HEK293 (cell line): ENCODE measurements at regions of chr21 and their contacts with region 1.

Region 1: GRCh38 chr21:32940079-32941014 is 85.4 kb upstream of the OLIG2 start:
- H3K4me3 ChIP-seq: no peak overlapping the region
- H3K27ac ChIP-seq: no peak overlapping the region
- H3K4me1 ChIP-seq: no peaks in the 10 kb centered on the region
- CTCF ChIP-seq: peak; percentile 50; the same call in 1 of the 2 replicates

Region 2: DNA sequence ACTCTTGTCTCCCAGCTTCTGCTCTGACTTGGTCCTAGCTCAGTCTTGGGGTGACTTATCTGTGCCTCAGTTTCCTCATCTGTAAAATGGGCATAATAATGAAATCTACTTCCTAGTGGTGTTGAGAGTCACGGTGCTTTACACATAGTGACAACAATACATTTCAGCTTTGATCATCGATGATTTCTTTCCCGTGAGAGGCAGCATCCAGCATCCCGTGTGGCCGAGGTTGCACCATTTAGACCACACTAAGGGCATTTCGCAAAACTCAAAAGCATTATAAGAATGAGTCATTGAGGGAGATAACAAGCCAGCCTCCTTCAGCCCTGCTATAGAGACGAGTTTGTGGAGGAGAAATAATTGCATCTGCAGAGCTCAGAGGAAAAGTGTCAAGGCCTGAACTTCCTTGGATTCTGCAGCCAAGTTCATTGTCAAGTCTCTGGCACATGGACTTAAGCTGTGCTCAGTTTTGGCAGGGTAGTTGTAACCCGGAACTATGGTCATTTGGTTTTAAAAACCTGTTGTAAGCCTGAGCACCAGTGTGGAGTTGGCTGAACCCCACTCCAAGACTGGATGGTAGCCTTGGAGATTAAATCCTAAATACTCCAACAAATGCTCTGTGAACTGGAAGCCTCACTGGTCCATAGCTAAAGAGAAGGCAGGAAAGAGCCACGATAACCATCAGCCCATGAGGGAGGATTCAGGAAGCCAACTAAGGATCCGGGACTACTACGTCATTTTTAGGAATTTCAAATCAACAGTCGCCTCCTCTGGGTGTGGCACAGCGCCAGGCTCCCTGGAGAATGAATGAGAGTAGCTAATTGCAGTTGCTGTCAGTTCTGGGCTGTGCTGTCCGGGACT is 419.2 kb before region 1 on chr21:
- CTCF ChIA-PET with region 1: no interaction called
- POLR2A ChIA-PET with region 1: no interaction called
- H3K4me3 ChIP-seq: no peak overlapping the region
- H3K27ac ChIP-seq: no peak overlapping the region
- H3K4me1 ChIP-seq: no peaks in the 10 kb centered on the region
- CTCF ChIP-seq: no peak

Region 3: GRCh38 chr21:32834916-32835235 is 105.5 kb before region 1 on chr21:
- CTCF ChIA-PET with region 1: interaction called, 16 read pairs
- POLR2A ChIA-PET with region 1: no interaction called
- H3K4me3 ChIP-seq: no peak overlapping the region
- H3K27ac ChIP-seq: no peak overlapping the region
- H3K4me1 ChIP-seq: no peaks in the 10 kb centered on the region
- CTCF ChIP-seq: no peak

Region 4: DNA sequence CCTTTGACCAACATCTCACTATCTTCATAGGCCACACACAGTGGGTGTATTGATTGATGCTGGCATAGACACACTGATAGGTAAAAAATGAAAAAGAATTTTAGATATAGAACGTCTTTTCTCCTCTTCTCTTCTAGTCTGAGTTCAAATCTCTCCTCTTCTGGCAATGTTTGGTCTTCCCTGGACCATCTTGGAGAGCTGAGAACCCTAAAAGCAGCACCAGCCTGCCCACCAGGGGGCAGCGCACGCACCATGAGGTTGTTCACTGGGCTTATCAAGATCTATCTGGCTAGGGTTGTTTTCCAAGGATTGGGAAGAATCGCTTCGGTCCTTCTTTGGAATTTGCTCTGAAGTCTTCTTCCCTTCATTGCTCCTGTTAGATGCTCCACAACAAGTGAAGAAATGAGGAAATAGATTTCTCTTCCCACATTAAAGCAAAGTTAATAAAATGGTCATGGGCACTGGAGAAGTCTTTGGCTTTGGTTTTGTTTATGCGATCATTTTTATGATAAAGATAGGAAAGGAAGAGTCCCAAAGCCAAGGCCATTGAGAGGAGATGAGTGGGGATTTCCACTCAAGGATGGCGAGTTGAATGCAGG is 18.6 kb before region 1 on chr21:
- CTCF ChIA-PET with region 1: interaction called, 57 read pairs
- POLR2A ChIA-PET with region 1: no interaction called
- H3K4me3 ChIP-seq: no peak overlapping the region
- H3K27ac ChIP-seq: no peak overlapping the region
- H3K4me1 ChIP-seq: no peaks in the 10 kb centered on the region
- CTCF ChIP-seq: no peak

Region 5: GRCh38 chr21:32958288-32959002 is 18.1 kb after region 1 on chr21:
- CTCF ChIA-PET with region 1: interaction called, 13 read pairs
- POLR2A ChIA-PET with region 1: no interaction called
- H3K4me3 ChIP-seq: no peak overlapping the region
- H3K27ac ChIP-seq: no peak overlapping the region
- H3K4me1 ChIP-seq: no peaks in the 10 kb centered on the region
- CTCF ChIP-seq: no peak

Region 6: DNA sequence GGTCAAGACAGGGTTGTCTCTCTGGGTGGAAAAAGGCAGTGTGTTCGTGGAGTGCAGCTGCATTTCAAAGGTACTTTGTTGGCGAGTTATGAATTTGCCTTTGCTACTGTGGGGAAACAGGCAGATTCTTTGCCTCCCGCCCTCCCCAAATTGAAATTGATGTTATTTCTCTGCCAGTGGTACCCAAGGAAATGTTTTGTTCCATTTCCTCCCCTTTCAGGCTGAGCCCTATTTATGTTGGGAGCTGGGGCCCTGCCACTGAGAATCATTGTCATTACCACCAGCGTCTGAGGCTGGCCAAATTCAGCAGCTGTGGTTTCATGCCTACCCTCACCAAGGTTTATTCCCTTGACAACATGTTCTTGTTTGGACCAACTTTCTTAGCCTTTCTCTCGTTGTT is 36.9 kb after region 1 on chr21:
- CTCF ChIA-PET with region 1: interaction called, 15 read pairs
- POLR2A ChIA-PET with region 1: no interaction called
- H3K4me3 ChIP-seq: no peak overlapping the region
- H3K27ac ChIP-seq: no peak overlapping the region
- H3K4me1 ChIP-seq: no peaks in the 10 kb centered on the region
- CTCF ChIP-seq: no peak

Region 7: DNA sequence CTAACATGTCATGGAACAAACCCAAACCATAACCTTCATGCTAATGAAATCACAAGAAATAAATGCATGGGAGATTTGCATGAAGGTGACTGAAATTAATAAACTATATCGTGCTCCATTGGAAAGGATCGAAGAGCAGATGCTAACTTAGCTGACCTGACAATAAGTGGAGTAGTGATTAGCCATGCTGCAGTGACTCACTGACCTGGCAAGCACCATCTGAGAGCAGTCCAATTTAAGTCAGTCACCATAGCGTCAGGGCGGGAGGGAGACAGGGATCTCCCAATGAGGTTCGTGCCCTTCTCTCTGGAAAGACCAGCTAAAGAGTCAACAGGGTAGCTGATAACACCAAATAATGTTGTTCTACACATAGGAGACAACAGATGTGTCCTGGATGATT is 106.9 kb after region 1 on chr21:
- CTCF ChIA-PET with region 1: no interaction called
- POLR2A ChIA-PET with region 1: no interaction called
- H3K4me3 ChIP-seq: no peak overlapping the region
- H3K27ac ChIP-seq: no peak overlapping the region
- H3K4me1 ChIP-seq: peaks cover 3% of the 10 kb centered on the region; the same call in 1 of the 2 replicates
- CTCF ChIP-seq: no peak

Region 8: GRCh38 chr21:33127154-33127893 is 187.0 kb after region 1 on chr21:
- CTCF ChIA-PET with region 1: interaction called, 68 read pairs
- POLR2A ChIA-PET with region 1: no interaction called
- H3K4me3 ChIP-seq: peak overlapping the region; percentile 11
- H3K27ac ChIP-seq: no peak overlapping the region
- H3K4me1 ChIP-seq: no peaks in the 10 kb centered on the region
- CTCF ChIP-seq: peak; percentile 84